GM10248 (cell line): ENCODE measurements at regions of chr20 and their contacts with region 1.

Region 1: GRCh38 chr20:3172743-3173609 is at the start of gene LZTS3:
- DNase-seq: peak; percentile 87
- CTCF ChIP-seq: no peak

Region 2: DNA sequence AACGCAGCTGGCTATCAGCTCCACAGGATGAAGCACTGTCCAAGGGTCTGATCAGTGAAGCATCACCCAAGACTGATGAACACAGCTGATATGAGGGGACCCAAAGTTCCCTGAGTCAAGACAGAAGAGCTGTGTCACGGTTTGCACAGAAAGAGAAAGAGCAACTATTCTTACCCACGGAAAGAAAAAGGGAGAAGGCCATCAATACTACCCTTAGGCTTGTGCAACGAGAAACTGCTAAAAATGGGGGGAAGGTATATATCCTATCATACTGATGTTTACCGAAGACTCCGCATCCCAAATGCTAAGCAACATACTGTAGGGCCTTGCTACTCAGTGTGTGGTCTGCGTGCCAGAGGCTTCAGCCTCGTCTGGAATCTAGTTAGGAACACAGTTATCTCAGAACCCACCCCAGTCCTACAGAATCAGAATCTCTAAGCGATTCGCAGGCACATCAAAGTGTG is 14.0 kb before region 1 on chr20:
- CTCF ChIA-PET with region 1: interaction called, 11 read pairs
- POLR2A ChIA-PET with region 1: interaction called, 3 read pairs
- DNase-seq: no peak
- CTCF ChIP-seq: no peak